GM23248 (cell line): ENCODE measurements at regions of chr10 and their contacts with region 1.

Region 1: GRCh38 chr10:35642027-35642792 is at the start of gene FZD8:
- DNase-seq: peak; percentile 97
- H3K4me3 ChIP-seq: peak within 1 kb of the TSS; percentile 78
- H3K27ac ChIP-seq: peak within 1 kb of the TSS; percentile 40
- H3K4me1 ChIP-seq: peaks cover 4% of the 10 kb centered on the region
- H3K27me3 ChIP-seq: no peaks in the 10 kb centered on the region
- total RNA-seq, gene FZD8: 22.3 and 25.5 TPM in 2 replicates

Region 2: GRCh38 chr10:35916791-35917190 is 274.6 kb after region 1 on chr10:
- in situ Hi-C with region 1: loop called (anchors 25 kb)
- DNase-seq: peak; percentile 49
- H3K4me3 ChIP-seq: no peak overlapping the region
- H3K27ac ChIP-seq: no peak overlapping the region
- H3K4me1 ChIP-seq: peaks cover 34% of the 10 kb centered on the region
- H3K27me3 ChIP-seq: no peaks in the 10 kb centered on the region

Region 3: GRCh38 chr10:35972275-35972674 is 330.1 kb after region 1 on chr10:
- in situ Hi-C with region 1: no loop called
- DNase-seq: no peak
- H3K4me3 ChIP-seq: no peak overlapping the region
- H3K27ac ChIP-seq: no peak overlapping the region
- H3K4me1 ChIP-seq: no peaks in the 10 kb centered on the region
- H3K27me3 ChIP-seq: peaks cover 8% of the 10 kb centered on the region; the same call in 1 of the 2 replicates

Region 4: DNA sequence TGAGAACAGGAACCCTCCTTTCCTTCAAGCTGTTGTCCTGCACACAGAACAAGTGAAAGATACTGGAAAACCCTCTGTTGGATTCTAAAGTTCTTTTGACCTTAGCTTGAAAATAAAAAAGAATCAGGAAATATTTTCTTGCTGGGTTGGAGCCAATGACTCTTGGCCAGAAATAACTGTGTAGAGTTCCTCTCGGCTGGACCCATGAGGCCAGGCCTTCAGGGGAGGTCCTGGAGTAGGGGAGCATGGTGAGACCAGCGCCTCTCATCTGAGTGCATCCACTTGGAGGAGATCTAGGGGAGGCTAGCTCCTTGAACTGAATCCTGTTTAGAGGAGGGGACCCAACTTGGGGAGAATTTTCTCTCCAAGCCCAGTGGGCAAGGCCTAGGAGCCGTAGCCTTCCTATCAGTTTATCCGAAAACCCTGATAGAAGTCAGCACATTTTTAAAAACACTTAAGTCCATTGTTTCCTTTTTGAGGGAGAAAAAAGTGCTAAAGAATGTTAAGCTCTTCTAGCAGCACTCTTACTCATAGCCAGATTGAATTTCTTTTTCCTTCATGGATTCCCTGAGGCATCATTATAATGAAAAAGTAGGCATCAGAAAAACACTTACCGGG is 847.5 kb after region 1 on chr10:
- in situ Hi-C with region 1: loop called (anchors 10 kb)
- DNase-seq: peak; percentile 78
- H3K4me3 ChIP-seq: no peak overlapping the region
- H3K27ac ChIP-seq: peak overlapping the region; percentile 88
- H3K4me1 ChIP-seq: peaks cover 57% of the 10 kb centered on the region
- H3K27me3 ChIP-seq: no peaks in the 10 kb centered on the region